CD4-positive, alpha-beta memory T cell (primary cell): ENCODE measurements at regions of chr3 and their contacts with region 1.

Region 1: GRCh38 chr3:158727206-158728060 is 4.8 kb downstream of the RARRES1 start:
- DNase-seq: peak; percentile 45 to 65 (median 63)
- H3K4me3 ChIP-seq: peak overlapping the region in 1 of 2 donors; percentile 3
- H3K4me3 Mint-ChIP-seq: peak overlapping the region in 7 of 8 donors; percentile 17 to 82 (median 62)
- H3K27ac ChIP-seq: no peak overlapping the region
- H3K27ac Mint-ChIP-seq: peak overlapping the region; percentile 37 to 98 (median 87)
- H3K4me1 ChIP-seq: peaks cover 37% of the 10 kb centered on the region
- H3K4me1 Mint-ChIP-seq: peaks cover 26 to 51% (median 43%) of the 10 kb centered on the region in 4 donors
- H3K27me3 ChIP-seq: no peaks in the 10 kb centered on the region
- H3K27me3 Mint-ChIP-seq: peaks cover 0 to 2% of the 10 kb centered on the region in 2 donors

Region 2: DNA sequence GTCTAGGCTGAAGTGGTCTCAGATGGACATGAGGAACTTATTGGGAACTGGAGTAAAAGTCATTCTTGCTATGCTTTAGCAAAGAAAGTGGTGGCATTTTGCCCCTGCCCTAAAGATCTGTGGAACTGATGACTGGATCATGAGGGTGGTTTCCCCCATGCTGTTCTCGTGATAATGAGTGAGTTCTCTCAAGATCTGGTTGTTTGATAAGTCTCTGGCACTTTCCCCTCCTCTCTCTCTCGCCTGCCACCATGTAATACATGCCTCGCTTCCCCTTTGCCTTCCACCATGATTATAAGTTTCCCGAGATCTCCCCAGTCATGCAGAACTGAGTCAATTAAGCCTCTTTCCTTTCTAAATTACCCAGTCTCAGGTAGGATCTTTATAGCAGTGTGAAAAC is 167.9 kb before region 1 on chr3:
- CTCF ChIA-PET with region 1: no interaction called
- POLR2A ChIA-PET with region 1: no interaction called
- intact Hi-C with region 1: no loop called
- DNase-seq: no peak
- H3K4me3 ChIP-seq: no peak overlapping the region
- H3K4me3 Mint-ChIP-seq: no peak overlapping the region
- H3K27ac ChIP-seq: no peak overlapping the region
- H3K27ac Mint-ChIP-seq: no peak overlapping the region
- H3K4me1 ChIP-seq: no peaks in the 10 kb centered on the region
- H3K4me1 Mint-ChIP-seq: no peaks in the 10 kb centered on the region
- H3K27me3 ChIP-seq: no peaks in the 10 kb centered on the region
- H3K27me3 Mint-ChIP-seq: peaks cover 2 to 12% of the 10 kb centered on the region in 2 donors

Region 3: DNA sequence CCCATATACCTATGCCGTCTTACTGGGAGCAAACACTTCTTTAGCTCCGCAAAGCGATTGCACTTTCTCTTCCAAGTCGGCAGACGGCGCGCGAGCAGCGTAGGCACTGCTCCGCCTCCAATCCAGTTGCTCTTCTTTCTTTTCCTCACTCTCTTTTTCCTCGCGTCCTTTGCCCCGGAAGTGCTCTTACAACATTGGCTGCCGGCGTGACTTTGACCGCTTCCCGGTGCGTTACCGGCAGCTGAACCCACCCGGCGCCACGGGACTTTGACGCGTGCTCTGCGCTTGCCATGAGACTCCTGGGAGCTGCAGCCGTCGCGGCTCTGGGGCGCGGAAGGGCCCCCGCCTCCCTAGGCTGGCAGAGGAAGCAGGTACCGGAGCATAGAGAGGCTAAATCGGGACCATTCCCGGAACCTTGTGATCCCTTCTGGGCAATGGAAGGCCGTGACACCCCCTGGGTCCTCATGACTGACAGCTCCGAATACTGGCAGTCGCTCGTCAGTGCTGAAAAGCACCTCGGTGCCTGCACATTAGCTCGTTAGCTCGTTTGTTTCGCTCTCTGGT is 83.0 kb before region 1 on chr3 and contains the start of gene GFM1:
- CTCF ChIA-PET with region 1: interaction called, 7 read pairs
- POLR2A ChIA-PET with region 1: interaction called, 10 read pairs
- intact Hi-C with region 1: no loop called
- DNase-seq: peak; percentile 88 to 93 (median 91)
- H3K4me3 ChIP-seq: peak within 1 kb of the TSS; percentile 69 to 87
- H3K4me3 Mint-ChIP-seq: peak within 1 kb of the TSS; percentile 92 to 100 (median 98)
- H3K27ac ChIP-seq: peak within 1 kb of the TSS; percentile 84
- H3K27ac Mint-ChIP-seq: peak within 1 kb of the TSS; percentile 40 to 98 (median 96)
- H3K4me1 ChIP-seq: peaks cover 34% of the 10 kb centered on the region
- H3K4me1 Mint-ChIP-seq: peaks cover 33 to 59% (median 42%) of the 10 kb centered on the region in 4 donors
- H3K27me3 ChIP-seq: no peaks in the 10 kb centered on the region
- H3K27me3 Mint-ChIP-seq: no peaks in the 10 kb centered on the region
- total RNA-seq, gene GFM1: 42.7 to 44.2 TPM

Region 4: GRCh38 chr3:158672293-158673176 is 54.9 kb before region 1 on chr3 and contains the start of gene LXN:
- CTCF ChIA-PET with region 1: interaction called, 6 read pairs
- POLR2A ChIA-PET with region 1: interaction called, 10 read pairs
- intact Hi-C with region 1: loop called (anchors 5 kb)
- DNase-seq: peak; percentile 76 to 89 (median 79)
- H3K4me3 ChIP-seq: peak within 1 kb of the TSS; percentile 62 to 64
- H3K4me3 Mint-ChIP-seq: peak within 1 kb of the TSS; percentile 92 to 99 (median 96)
- H3K27ac ChIP-seq: peak within 1 kb of the TSS; percentile 63
- H3K27ac Mint-ChIP-seq: peak within 1 kb of the TSS; percentile 81 to 97 (median 96)
- H3K4me1 ChIP-seq: peaks cover 19% of the 10 kb centered on the region
- H3K4me1 Mint-ChIP-seq: peaks cover 12 to 32% (median 22%) of the 10 kb centered on the region in 4 donors
- H3K27me3 ChIP-seq: no peaks in the 10 kb centered on the region
- H3K27me3 Mint-ChIP-seq: no peaks in the 10 kb centered on the region
- total RNA-seq, gene LXN: 7.7 to 8.1 TPM

Region 5: DNA sequence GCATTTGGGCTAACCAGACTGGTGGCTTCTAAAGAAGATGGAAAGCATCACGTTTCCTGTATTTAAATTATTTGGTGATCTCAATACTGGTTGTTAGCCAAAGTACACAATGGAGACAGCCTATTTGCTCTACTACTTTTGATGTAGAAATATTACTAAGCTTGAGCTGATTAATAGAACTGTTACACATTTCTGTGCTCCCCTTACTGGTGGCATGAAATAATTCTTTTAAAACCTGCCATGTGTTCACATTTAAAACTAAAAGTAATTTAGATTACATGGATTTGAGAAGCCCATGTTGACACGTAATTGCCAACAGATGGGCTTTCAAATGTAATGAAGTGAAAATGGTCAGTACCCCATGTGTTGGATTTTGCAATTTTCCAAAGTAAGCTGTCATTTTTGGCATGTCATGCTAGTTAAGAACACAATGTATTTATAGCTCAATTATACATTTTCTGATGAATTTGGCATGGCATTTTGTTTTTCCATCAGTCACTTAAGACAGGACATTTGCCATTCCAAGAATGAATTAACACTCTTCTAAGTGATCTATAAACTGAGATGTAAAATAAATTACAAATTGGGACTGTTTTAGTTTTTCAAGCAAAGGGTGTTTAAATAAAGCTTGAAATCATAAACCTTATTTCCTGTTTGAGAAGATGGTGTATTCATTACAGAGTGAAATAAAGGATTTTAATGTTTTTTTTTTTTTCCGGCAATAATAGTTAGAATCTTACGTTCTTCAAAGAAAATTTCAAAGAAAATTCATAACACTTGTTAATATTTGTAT is 15.6 kb after region 1 on chr3:
- CTCF ChIA-PET with region 1: interaction called, 23 read pairs
- POLR2A ChIA-PET with region 1: interaction called, 6 read pairs
- intact Hi-C with region 1: no loop called
- DNase-seq: no peak
- H3K4me3 ChIP-seq: no peak overlapping the region
- H3K4me3 Mint-ChIP-seq: no peak overlapping the region
- H3K27ac ChIP-seq: no peak overlapping the region
- H3K27ac Mint-ChIP-seq: peak overlapping the region in 1 of 7 donors; percentile 49
- H3K4me1 ChIP-seq: peaks cover 4% of the 10 kb centered on the region
- H3K4me1 Mint-ChIP-seq: peaks cover 7 to 24% (median 15%) of the 10 kb centered on the region in 4 donors
- H3K27me3 ChIP-seq: no peaks in the 10 kb centered on the region
- H3K27me3 Mint-ChIP-seq: no peaks in the 10 kb centered on the region

Region 6: DNA sequence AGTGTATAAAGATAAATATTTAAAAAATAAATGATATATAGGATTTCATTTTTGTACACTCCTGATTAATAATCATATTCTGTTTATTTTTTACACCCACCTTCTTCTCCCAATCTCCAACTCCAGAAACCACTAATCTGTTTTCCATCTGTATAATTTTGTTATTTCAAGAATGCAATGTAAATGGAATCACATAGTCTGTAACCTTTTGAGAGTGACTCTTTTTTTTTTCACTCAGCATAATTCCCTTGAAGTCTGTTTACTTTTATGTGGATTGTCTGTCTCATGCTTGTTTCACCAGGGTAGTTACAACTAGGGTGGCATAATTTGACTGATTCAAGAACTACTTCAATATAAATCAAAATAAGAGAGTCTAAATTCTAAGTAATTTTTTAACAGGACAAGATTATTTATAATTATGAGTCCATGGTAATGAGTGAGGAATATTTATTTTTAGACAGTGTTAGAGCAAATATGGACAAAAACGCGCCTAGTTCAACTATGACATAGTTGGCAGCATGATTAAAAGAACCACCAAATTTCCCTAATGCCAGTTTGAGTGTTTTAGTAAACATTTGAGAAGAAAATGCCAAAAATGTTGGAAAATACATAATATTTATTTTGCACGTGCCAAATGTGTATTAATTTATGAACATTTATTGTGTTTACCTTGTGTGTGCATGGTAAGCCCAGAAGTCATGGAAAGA is 55.0 kb after region 1 on chr3:
- CTCF ChIA-PET with region 1: interaction called, 28 read pairs
- POLR2A ChIA-PET with region 1: no interaction called
- intact Hi-C with region 1: no loop called
- DNase-seq: no peak
- H3K4me3 ChIP-seq: no peak overlapping the region
- H3K4me3 Mint-ChIP-seq: no peak overlapping the region
- H3K27ac ChIP-seq: no peak overlapping the region
- H3K27ac Mint-ChIP-seq: no peak overlapping the region
- H3K4me1 ChIP-seq: no peaks in the 10 kb centered on the region
- H3K4me1 Mint-ChIP-seq: no peaks in the 10 kb centered on the region
- H3K27me3 ChIP-seq: no peaks in the 10 kb centered on the region
- H3K27me3 Mint-ChIP-seq: peaks cover 0 to 1% of the 10 kb centered on the region in 2 donors

Region 7: DNA sequence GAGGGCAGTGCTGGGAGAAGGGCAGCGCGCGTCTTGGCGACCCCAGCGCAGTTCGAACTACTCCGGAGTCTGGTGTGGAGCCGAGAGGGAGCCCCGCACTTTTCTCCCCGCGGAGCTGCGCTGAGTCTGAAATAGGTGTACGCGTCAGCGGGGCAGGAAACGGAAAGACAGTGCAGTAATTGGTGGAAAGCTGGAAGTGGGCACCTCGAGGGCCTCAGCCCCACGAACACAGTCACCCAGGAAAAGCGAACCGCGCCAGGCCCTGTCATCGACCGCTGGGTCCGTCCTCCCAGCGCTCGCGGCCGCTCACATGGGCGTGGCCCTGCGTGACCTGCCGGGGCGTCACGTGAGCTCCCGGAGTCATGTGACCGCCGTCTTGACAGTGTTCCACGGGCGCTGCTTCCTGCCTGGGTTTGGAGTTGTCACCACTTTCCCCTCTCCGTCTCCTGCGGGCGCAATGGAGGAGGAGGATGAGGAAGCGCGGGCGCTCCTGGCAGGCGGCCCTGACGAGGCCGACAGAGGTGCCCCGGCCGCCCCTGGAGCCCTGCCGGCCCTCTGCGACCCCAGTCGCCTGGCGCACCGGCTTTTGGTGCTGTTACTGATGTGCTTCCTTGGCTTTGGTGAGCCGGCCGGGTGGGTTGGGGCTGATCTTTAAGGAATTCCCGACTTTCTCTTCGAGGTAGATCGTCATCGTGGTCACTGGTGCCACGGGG is 74.4 kb after region 1 on chr3 and contains the start of gene MFSD1:
- CTCF ChIA-PET with region 1: interaction called, 40 read pairs
- POLR2A ChIA-PET with region 1: interaction called, 25 read pairs
- intact Hi-C with region 1: no loop called
- DNase-seq: peak; percentile 86 to 92 (median 88)
- H3K4me3 ChIP-seq: peak within 1 kb of the TSS; percentile 68 to 98
- H3K4me3 Mint-ChIP-seq: peak within 1 kb of the TSS; percentile 89 to 93 (median 92)
- H3K27ac ChIP-seq: peak within 1 kb of the TSS; percentile 63
- H3K27ac Mint-ChIP-seq: peak within 1 kb of the TSS; percentile 71 to 97 (median 94)
- H3K4me1 ChIP-seq: peaks cover 36% of the 10 kb centered on the region
- H3K4me1 Mint-ChIP-seq: peaks cover 24 to 41% (median 35%) of the 10 kb centered on the region in 4 donors
- H3K27me3 ChIP-seq: no peaks in the 10 kb centered on the region
- H3K27me3 Mint-ChIP-seq: no peaks in the 10 kb centered on the region
- total RNA-seq, gene MFSD1: 31.7 to 33.7 TPM

Region 8: DNA sequence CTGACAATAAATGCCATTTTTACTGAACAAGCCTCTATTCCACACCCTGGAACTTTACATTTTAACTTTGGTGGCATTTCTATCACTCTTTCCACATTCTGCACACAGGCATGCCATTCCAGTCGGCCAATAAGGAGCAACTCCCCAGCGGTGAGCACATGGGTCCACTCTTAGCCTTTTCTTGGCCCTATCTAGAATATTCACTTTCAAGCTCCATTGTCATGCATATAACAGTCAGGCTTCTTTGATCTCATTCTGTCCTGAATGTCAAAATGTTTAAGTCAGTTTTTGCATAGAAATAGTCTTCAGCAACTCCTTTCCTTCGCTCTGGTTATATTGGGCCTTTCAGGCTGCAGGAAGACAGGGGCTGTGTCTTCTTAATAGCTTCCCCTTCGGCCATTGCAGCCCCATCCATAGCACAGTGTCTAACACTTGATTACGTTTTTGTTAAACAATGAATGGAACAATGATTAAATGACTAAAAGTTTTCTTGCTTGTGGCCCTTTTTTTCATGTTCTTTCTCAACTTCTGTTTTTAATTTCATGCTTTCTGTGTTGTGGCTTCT is 501.8 kb after region 1 on chr3:
- CTCF ChIA-PET with region 1: no interaction called
- POLR2A ChIA-PET with region 1: no interaction called
- intact Hi-C with region 1: no loop called
- DNase-seq: no peak
- H3K4me3 ChIP-seq: no peak overlapping the region
- H3K4me3 Mint-ChIP-seq: no peak overlapping the region
- H3K27ac ChIP-seq: no peak overlapping the region
- H3K27ac Mint-ChIP-seq: no peak overlapping the region
- H3K4me1 ChIP-seq: no peaks in the 10 kb centered on the region
- H3K4me1 Mint-ChIP-seq: no peaks in the 10 kb centered on the region
- H3K27me3 ChIP-seq: no peaks in the 10 kb centered on the region
- H3K27me3 Mint-ChIP-seq: no peaks in the 10 kb centered on the region